Endothelial cell of umbilical vein (primary cell): ENCODE measurements at regions of chr7 and their contacts with region 1.

Region 1: GRCh38 chr7:116340943-116341907 is 130.9 kb downstream of the TES start:
- DNase-seq: peak; percentile 72
- H3K4me3 ChIP-seq: peak overlapping the region in 1 of 3 experiments; percentile 31
- H3K27ac ChIP-seq: peak overlapping the region; percentile 87
- H3K4me1 ChIP-seq: peaks cover 49% of the 10 kb centered on the region
- H3K27me3 ChIP-seq: no peaks in the 10 kb centered on the region
- CTCF ChIP-seq: peak; percentile 45 to 48
- POLR2A ChIP-seq: no peak

Region 2: DNA sequence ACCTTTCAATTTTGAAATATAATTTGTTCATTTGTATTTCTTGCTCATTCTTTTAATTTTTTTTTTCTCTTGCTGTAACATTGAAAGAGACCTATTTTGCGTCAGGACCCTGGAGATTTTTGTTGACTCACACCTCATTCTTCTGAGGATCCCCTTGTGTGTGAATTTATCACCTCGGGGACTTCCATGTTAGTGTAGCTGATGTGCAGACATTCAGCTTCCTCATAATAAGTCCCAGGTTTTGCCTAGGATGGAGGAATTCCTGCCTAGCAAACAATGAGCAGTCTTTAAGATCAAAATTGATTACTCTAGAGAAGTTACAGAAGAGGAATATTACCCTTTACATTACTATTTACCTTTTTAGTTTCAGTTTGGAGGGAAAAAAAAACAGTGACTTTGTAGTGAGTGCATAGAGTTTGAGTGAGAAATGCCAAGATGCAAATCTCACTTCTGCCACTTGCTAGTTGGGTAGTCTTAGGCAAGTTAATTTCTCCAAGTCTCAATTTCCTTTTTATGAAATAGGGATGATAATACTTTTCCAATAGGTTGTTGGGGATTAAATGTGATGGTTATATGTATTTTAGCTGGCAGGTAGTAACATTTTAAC is 116.6 kb before region 1 on chr7:
- CTCF ChIA-PET with region 1: no interaction called
- POLR2A ChIA-PET with region 1: no interaction called
- dilution Hi-C with region 1: no loop called
- intact Hi-C with region 1: no loop called
- DNase-seq: no peak
- H3K4me3 ChIP-seq: no peak overlapping the region
- H3K27ac ChIP-seq: no peak overlapping the region
- H3K4me1 ChIP-seq: peaks cover 4% of the 10 kb centered on the region
- H3K27me3 ChIP-seq: no peaks in the 10 kb centered on the region
- CTCF ChIP-seq: no peak
- POLR2A ChIP-seq: no peak

Region 3: DNA sequence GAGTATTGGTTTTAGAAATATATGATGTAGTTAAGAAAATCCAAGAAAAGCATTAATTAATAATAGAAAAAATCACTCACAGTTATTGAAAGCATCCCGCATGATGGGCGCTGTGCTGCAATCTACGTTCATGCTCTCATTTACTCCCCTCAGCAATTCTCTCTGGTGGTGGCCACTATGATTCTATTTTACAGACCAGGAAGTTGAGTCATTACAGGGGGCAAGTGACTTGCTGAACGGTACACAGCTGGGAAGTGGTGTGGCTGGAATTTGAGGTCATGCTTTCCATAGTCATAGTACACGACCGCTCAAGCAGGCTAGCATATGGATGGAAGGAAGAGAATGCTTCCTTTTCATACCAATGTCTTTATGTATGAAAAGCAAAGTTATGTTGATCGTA is 13.5 kb before region 1 on chr7:
- CTCF ChIA-PET with region 1: interaction called, 28 read pairs
- POLR2A ChIA-PET with region 1: interaction called, 11 read pairs
- dilution Hi-C with region 1: no loop called
- intact Hi-C with region 1: loop called (anchors 1 kb)
- DNase-seq: peak; percentile 97
- H3K4me3 ChIP-seq: peak overlapping the region; percentile 43 to 99 (median 98)
- H3K27ac ChIP-seq: peak overlapping the region; percentile 97
- H3K4me1 ChIP-seq: peaks cover 48% of the 10 kb centered on the region
- H3K27me3 ChIP-seq: no peaks in the 10 kb centered on the region
- CTCF ChIP-seq: no peak
- POLR2A ChIP-seq: peak; percentile 97

Region 4: DNA sequence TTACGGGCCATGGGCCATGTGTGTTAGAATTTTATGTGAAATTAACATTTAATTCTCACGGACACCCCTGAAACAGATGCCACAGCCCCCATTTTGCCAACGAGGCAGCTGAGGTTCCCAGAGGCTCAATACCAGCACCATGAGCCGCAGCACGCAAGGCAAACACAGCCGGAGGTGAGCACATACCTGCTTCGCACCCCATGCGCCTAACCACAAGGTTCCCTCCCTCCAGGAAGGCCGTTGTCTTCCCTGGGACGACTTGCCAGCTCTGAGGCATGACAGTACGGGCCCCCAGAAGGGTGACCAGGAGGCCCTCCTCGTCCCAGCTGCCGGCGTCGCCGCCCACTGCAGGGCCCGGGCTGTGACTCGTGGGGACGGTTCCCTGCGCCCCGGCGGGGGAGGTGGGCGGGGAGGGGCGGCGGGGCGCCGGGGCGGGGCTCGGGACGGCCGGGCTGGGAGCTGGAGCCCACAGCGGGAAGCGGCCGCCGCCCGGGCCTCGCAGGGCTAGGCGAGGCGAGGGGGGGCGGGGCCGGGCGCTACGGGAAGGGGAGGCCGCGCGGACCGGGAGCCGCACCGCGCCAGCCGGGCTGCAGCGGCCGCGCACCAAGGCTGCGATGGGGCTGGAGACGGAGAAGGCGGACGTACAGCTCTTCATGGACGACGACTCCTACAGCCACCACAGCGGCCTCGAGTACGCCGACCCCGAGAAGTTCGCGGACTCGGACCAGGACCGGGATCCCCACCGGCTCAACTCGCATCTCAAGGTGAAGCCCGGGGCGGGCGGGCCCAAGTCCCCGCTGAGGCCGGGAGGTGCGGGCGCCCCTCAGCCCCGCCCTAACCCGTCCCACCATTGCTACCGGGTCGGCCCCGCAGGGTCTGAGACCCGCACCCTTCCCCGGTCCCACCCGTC is 158.2 kb after region 1 on chr7 and contains the start of gene CAV2:
- CTCF ChIA-PET with region 1: no interaction called
- POLR2A ChIA-PET with region 1: no interaction called
- dilution Hi-C with region 1: loop called (anchors 25 kb)
- intact Hi-C with region 1: loop called (anchors 1 kb)
- DNase-seq: peak; percentile 63
- H3K4me3 ChIP-seq: peak within 1 kb of the TSS; percentile 59 to 86 (median 82)
- H3K27ac ChIP-seq: peak within 1 kb of the TSS; percentile 83
- H3K4me1 ChIP-seq: peaks cover 31% of the 10 kb centered on the region
- H3K27me3 ChIP-seq: no peaks in the 10 kb centered on the region
- CTCF ChIP-seq: no peak
- POLR2A ChIP-seq: peak; percentile 76
- total RNA-seq, gene CAV2: 146 and 179 TPM in 2 replicates

Region 5: GRCh38 chr7:116511552-116512519 is 170.6 kb after region 1 on chr7:
- CTCF ChIA-PET with region 1: no interaction called
- POLR2A ChIA-PET with region 1: no interaction called
- dilution Hi-C with region 1: loop called (anchors 25 kb)
- intact Hi-C with region 1: loop called (anchors 1 kb)
- DNase-seq: peak; percentile 96
- H3K4me3 ChIP-seq: peak overlapping the region; percentile 32 to 70 (median 45)
- H3K27ac ChIP-seq: peak overlapping the region; percentile 96
- H3K4me1 ChIP-seq: peaks cover 54% of the 10 kb centered on the region
- H3K27me3 ChIP-seq: no peaks in the 10 kb centered on the region
- CTCF ChIP-seq: no peak
- POLR2A ChIP-seq: peak; percentile 76